ENCODE measurements at regions of chr15 and their contacts with region 1.

Region 1: DNA sequence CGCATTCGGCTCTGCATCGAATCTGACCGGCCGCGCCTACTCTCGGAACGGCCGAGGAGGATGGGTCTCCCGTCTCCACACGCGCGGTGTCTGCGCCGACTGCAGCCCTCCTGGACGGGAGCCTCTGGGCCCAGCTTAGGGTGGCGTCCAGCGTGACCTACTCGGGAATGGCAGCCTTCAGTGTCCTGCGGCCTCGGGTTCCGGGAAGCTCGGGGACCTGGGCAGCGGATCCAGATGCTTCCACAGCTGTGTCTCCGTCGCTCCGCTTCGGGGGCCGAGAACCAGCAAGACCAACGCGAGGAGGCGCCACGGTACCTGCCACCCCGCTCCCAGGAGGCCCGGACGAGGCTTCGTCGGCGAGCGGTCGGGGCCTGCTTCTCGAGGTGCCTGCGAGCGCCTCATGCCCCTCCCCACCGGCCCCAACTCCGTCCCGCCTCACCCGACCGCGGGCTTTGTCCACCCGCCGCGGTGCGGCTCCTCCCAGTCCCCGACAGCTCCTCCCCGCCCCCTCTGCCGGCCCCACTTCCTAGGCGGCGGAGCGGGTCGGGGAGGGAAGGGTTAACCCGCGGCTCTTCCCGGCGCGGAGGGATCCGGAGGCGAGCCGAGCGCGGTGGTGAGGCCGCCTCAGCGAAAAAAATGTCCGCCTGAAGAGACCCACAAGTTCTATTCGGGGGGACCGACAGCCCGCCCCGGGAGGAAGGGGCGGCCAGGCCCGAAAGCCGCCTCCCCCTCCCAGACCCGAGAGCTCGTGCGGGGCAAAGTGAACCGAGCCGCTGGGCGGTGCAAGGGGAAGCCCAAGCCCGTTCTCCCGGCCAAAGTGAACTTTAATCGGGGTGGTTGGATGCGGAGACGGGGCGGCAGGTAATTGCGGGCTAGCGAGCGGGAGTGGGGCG is at the start of gene TCF12:
- DNase-seq: peak; percentile 92
- ATAC-seq: peak; percentile 81
- H3K4me3 Mint-ChIP-seq: peak within 1 kb of the TSS; percentile 92
- H3K27ac Mint-ChIP-seq: peak within 1 kb of the TSS; percentile 80
- H3K4me1 Mint-ChIP-seq: peaks cover 32% of the 10 kb centered on the region
- H3K27me3 Mint-ChIP-seq: no peaks in the 10 kb centered on the region
- CTCF ChIP-seq: no peak
- total RNA-seq, gene TCF12: 88.5 and 119 TPM in 2 replicates

Region 2: DNA sequence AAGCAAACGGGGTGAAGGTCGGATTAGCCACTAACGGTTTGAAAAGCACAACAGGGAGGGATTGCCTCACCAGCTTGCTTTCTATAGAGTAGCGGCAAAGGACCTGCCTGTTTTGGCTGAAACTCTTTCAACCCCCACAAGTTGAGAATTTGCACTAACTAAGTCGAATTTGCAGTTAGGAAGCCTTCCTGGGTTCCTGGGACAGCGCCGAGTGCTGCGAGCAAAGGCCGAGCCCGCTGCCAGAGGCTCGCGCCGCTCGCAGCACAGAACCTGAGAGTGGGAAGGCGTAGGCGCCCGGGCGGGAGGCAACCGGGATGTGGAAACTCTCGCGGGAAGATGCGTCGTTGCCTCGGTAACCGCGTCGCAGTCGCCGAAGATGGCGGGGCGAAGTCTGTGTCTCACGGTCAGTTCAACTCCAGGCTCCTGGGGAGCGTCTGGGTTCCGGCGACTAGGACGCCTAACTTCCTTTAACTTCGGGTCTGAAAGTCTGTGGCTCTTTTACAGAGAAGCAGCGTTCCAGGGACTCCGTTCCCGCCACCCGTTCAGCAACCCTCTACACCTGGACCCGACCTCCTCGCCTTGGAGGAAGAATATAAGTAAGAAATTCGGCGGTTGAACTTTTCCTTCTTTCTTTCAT is 553.1 kb before region 1 on chr15 and contains the start of gene TEX9:
- CTCF ChIA-PET with region 1: no interaction called
- POLR2A ChIA-PET with region 1: no interaction called
- intact Hi-C with region 1: loop called (anchors 5 kb)
- DNase-seq: peak; percentile 73
- ATAC-seq: peak; percentile 92
- H3K4me3 Mint-ChIP-seq: peak within 1 kb of the TSS; percentile 95
- H3K27ac Mint-ChIP-seq: peak within 1 kb of the TSS; percentile 77
- H3K4me1 Mint-ChIP-seq: peaks cover 32% of the 10 kb centered on the region
- H3K27me3 Mint-ChIP-seq: peaks cover 3% of the 10 kb centered on the region
- CTCF ChIP-seq: no peak
- total RNA-seq, gene TEX9: 29.7 and 31.3 TPM in 2 replicates

Region 3: GRCh38 chr15:56821721-56822425 is 96.4 kb before region 1 on chr15:
- CTCF ChIA-PET with region 1: no interaction called
- POLR2A ChIA-PET with region 1: no interaction called
- intact Hi-C with region 1: loop called (anchors 5 kb)
- DNase-seq: no peak
- ATAC-seq: peak; percentile 68
- H3K4me3 Mint-ChIP-seq: no peak overlapping the region
- H3K27ac Mint-ChIP-seq: no peak overlapping the region
- H3K4me1 Mint-ChIP-seq: peaks cover 4% of the 10 kb centered on the region
- H3K27me3 Mint-ChIP-seq: no peaks in the 10 kb centered on the region
- CTCF ChIP-seq: peak; percentile 16

Region 4: GRCh38 chr15:56906771-56907170 is 11.5 kb before region 1 on chr15:
- CTCF ChIA-PET with region 1: interaction called, 5 read pairs
- POLR2A ChIA-PET with region 1: interaction called, 17 read pairs
- intact Hi-C with region 1: loop called (anchors 1 kb)
- DNase-seq: no peak
- ATAC-seq: no peak
- H3K4me3 Mint-ChIP-seq: peak overlapping the region; percentile 59
- H3K27ac Mint-ChIP-seq: peak overlapping the region; percentile 62
- H3K4me1 Mint-ChIP-seq: peaks cover 14% of the 10 kb centered on the region
- H3K27me3 Mint-ChIP-seq: no peaks in the 10 kb centered on the region
- CTCF ChIP-seq: no peak

Region 5: DNA sequence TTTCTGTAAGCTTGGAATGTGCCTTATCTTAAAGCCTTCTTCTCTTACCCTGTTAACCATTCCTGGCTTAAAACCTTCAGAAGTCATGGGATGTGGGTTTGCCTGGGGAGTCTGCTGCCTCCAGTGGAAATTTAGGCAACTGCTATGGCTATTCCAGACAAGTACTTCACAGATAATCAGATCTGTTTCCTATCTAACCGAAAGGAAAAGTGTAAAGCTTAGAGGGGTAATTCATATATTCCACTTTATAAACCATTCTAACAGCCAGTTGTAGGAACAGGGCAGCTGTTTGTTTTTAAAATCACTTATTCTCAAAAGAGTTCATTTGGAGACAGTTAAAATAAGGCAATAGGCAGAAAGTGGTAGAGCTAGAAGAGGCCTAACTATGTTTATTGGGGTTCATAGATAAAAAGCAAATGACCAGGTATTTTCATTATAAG is 220.1 kb after region 1 on chr15:
- CTCF ChIA-PET with region 1: interaction called, 9 read pairs
- POLR2A ChIA-PET with region 1: interaction called, 4 read pairs
- intact Hi-C with region 1: loop called (anchors 1 kb)
- DNase-seq: no peak
- ATAC-seq: no peak
- H3K4me3 Mint-ChIP-seq: no peak overlapping the region
- H3K27ac Mint-ChIP-seq: no peak overlapping the region
- H3K4me1 Mint-ChIP-seq: peaks cover 22% of the 10 kb centered on the region
- H3K27me3 Mint-ChIP-seq: no peaks in the 10 kb centered on the region
- CTCF ChIP-seq: no peak

Region 6: GRCh38 chr15:57527382-57528091 is 609.2 kb after region 1 on chr15:
- CTCF ChIA-PET with region 1: interaction called, 8 read pairs
- POLR2A ChIA-PET with region 1: no interaction called
- intact Hi-C with region 1: loop called (anchors 5 kb)
- DNase-seq: peak; percentile 25
- ATAC-seq: peak; percentile 99
- H3K4me3 Mint-ChIP-seq: no peak overlapping the region
- H3K27ac Mint-ChIP-seq: no peak overlapping the region
- H3K4me1 Mint-ChIP-seq: peaks cover 11% of the 10 kb centered on the region
- H3K27me3 Mint-ChIP-seq: peaks cover 3% of the 10 kb centered on the region
- CTCF ChIP-seq: no peak

Measured in activated B cell treated with CpG ODN at 0.5 μM for 24 hours (primary cell).